ENCODE measurements at regions of chr17 and their contacts with region 1.

Region 1: GRCh38 chr17:4074831-4075495 is 67.9 kb downstream of the ZZEF1 start:
- DNase-seq: no peak
- ATAC-seq: peak; percentile 25 to 70 (median 56)
- H3K4me3 ChIP-seq: no peak overlapping the region
- H3K27ac ChIP-seq: peak overlapping the region in 2 of 10 donors; percentile 3 to 7
- H3K4me1 ChIP-seq: peaks cover 0 to 22% (median 4%) of the 10 kb centered on the region in 9 donors
- H3K27me3 ChIP-seq: no peaks in the 10 kb centered on the region
- CTCF ChIP-seq: peak; percentile 30 to 73 (median 61)

Region 2: DNA sequence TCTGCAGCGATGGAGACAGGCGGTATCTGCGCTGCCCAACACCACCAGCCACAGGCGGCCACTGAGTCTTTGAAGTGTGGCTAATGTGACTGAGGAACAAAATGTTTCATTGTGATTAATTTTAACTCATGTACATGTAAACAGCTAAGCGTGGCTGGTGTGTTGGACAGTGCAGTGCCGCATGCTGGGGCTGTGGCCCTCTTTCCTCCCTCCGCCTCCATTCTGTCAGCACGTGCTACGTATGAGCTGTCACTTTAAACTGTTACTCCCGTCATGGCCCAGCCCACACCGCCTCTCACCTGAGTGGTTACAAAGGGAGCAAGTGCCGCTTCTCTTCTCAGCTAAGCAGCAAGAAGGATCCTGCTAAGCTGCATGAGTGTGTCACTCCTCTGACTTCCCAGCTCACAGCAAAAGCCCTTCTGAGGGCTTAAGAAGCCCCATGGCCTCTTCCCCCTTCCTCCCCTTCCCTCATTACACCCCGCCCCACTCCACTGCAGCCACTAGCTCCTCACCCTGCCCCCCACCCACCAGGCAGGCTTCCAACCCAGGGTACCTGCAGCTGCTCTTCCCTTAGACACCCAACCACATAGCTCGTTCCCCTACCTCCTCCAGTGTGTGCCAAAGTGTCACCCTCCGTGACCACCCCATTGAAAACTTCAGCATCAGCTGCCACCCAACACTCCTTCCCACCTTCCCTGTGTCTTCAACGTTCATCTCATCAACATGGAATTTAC is 336.2 kb before region 1 on chr17:
- intact Hi-C with region 1: loop called in 1 of 10 experiments (anchors 10 kb)
- DNase-seq: no peak
- ATAC-seq: peak in 7 of 8 donors; percentile 28 to 69 (median 50)
- H3K4me3 ChIP-seq: peak overlapping the region in 3 of 10 donors; percentile 32 to 39 (median 32)
- H3K27ac ChIP-seq: peak overlapping the region in 2 of 10 donors; percentile 20 to 48
- H3K4me1 ChIP-seq: peaks cover 0 to 17% (median 7%) of the 10 kb centered on the region in 9 donors
- H3K27me3 ChIP-seq: peaks cover 0 to 10% (median 0%) of the 10 kb centered on the region in 7 donors
- CTCF ChIP-seq: no peak

Region 3: DNA sequence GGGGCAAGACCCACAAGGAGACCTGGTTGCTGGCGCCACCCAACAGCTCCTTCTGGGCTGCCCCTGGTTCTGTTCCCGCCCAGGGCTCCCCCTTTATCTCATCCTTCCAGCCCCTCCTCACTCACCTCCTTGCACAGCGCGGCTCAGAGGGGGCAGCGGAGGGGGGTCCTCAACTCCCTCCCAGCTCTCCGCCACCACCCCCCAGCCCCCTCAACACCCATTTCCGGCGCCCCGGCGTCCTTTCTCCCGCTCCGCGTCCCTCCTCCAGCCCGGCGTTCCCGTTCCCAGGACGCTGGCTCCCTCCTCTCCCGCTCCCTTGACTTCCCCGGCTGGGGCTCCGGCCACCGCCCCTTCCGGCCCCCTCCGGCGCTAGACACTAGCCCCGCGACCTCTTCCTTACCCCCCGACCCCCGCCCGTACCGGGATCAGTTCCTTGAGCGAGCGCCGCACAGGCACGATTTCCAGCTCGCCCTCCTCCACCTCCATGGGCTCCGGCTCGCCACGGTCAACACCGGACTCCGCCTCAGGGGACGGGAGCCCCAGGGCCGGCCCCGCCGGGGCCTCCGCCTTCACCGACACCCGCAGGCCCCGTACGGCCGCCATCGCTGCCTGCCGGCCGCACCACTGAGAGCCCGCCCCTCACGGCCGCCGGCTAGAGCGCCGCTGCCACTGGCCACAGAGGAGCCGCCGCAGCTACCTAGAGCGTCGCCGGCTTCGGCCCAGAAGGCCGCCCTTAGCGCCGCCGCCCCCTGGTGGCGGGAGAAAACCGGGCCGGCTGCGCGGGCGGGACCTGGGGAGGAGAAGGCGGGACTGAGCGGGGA is 229.1 kb before region 1 on chr17 and contains the start of gene NCBP3:
- intact Hi-C with region 1: no loop called
- DNase-seq: peak; percentile 86 to 91
- ATAC-seq: peak; percentile 97 to 99 (median 98)
- H3K4me3 ChIP-seq: peak within 1 kb of the TSS; percentile 56 to 98 (median 90)
- H3K27ac ChIP-seq: peak within 1 kb of the TSS; percentile 42 to 99 (median 94)
- H3K4me1 ChIP-seq: peaks cover 5 to 27% (median 16%) of the 10 kb centered on the region in 9 donors
- H3K27me3 ChIP-seq: no peaks in the 10 kb centered on the region
- CTCF ChIP-seq: peak; percentile 90 to 99 (median 98)
- total RNA-seq, gene NCBP3: 14.6 to 30.9 (median 23.1) TPM

Region 4: GRCh38 chr17:3865176-3865575 is 209.8 kb before region 1 on chr17:
- intact Hi-C with region 1: loop called in 1 of 10 experiments (anchors 10 kb)
- DNase-seq: no peak
- ATAC-seq: peak in 4 of 8 donors; percentile 37 to 68 (median 62)
- H3K4me3 ChIP-seq: no peak overlapping the region
- H3K27ac ChIP-seq: no peak overlapping the region
- H3K4me1 ChIP-seq: peaks cover 0 to 8% (median 0%) of the 10 kb centered on the region in 9 donors
- H3K27me3 ChIP-seq: no peaks in the 10 kb centered on the region
- CTCF ChIP-seq: no peak

Region 5: GRCh38 chr17:3913531-3914311 is 161.2 kb before region 1 on chr17:
- intact Hi-C with region 1: loop called in 2 of 10 experiments (anchors 5 to 10 kb)
- DNase-seq: peak; percentile 79 to 86
- ATAC-seq: peak; percentile 57 to 78 (median 68)
- H3K4me3 ChIP-seq: peak overlapping the region in 1 of 10 donors; percentile 51
- H3K27ac ChIP-seq: peak overlapping the region in 3 of 10 donors; percentile 33 to 89 (median 41)
- H3K4me1 ChIP-seq: peaks cover 9 to 58% (median 36%) of the 10 kb centered on the region in 9 donors
- H3K27me3 ChIP-seq: no peaks in the 10 kb centered on the region
- CTCF ChIP-seq: peak; percentile 91 to 99 (median 98)

Region 6: DNA sequence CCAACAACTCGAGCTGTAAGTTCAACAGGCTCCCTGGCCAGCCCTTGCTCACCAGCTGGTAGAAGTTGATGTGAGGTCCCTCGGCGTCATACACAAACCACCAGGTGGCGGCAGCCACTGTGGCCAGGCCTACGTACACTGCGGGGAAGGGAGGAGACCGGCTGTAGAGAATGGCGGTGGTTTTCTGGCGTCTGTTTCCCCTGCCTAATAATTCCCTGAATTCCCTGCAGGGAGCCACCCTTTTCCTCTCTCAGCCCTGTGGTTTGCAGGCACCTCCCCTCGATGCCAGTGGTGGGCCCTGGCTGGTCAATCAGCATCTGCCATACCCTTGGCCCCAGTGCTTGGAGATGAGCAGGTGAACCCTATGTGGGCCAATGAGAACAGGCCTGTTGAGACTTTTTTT is 139.8 kb before region 1 on chr17:
- intact Hi-C with region 1: loop called in 3 of 10 experiments (anchors 2 to 10 kb)
- DNase-seq: peak; percentile 71 to 73
- ATAC-seq: peak; percentile 91 to 98 (median 96)
- H3K4me3 ChIP-seq: no peak overlapping the region
- H3K27ac ChIP-seq: no peak overlapping the region
- H3K4me1 ChIP-seq: peaks cover 0 to 6% (median 0%) of the 10 kb centered on the region in 9 donors
- H3K27me3 ChIP-seq: no peaks in the 10 kb centered on the region
- CTCF ChIP-seq: peak; percentile 71 to 83 (median 78)

Region 7: GRCh38 chr17:4412933-4413831 is 338.2 kb after region 1 on chr17:
- intact Hi-C with region 1: loop called in 1 of 10 experiments (anchors 10 kb)
- DNase-seq: peak; percentile 93 to 95
- ATAC-seq: peak; percentile 95 to 99 (median 97)
- H3K4me3 ChIP-seq: peak overlapping the region in 1 of 10 donors; percentile 9
- H3K27ac ChIP-seq: no peak overlapping the region
- H3K4me1 ChIP-seq: peaks cover 0 to 7% (median 0%) of the 10 kb centered on the region in 9 donors
- H3K27me3 ChIP-seq: no peaks in the 10 kb centered on the region
- CTCF ChIP-seq: peak; percentile 84 to 92 (median 89)

Measured in heart right ventricle (tissue), 16 donors.